Heart left ventricle (tissue), 16 donors: ENCODE measurements at regions of chr22 and their contacts with region 1.

Region 1: GRCh38 chr22:20507253-20508066 is at the start of gene MED15:
- DNase-seq: peak; percentile 92 to 95 (median 93)
- ATAC-seq: peak; percentile 90 to 94 (median 94)
- H3K4me3 ChIP-seq: peak within 1 kb of the TSS; percentile 58 to 97 (median 82)
- H3K27ac ChIP-seq: peak within 1 kb of the TSS; percentile 77 to 97 (median 94)
- H3K4me1 ChIP-seq: peaks cover 0 to 48% (median 37%) of the 10 kb centered on the region in 12 donors
- H3K27me3 ChIP-seq: no peaks in the 10 kb centered on the region
- CTCF ChIP-seq: no peak
- POLR2A ChIP-seq: peak; percentile 37 to 82
- total RNA-seq, gene MED15: 27.9 to 78.3 (median 43.0) TPM

Region 2: DNA sequence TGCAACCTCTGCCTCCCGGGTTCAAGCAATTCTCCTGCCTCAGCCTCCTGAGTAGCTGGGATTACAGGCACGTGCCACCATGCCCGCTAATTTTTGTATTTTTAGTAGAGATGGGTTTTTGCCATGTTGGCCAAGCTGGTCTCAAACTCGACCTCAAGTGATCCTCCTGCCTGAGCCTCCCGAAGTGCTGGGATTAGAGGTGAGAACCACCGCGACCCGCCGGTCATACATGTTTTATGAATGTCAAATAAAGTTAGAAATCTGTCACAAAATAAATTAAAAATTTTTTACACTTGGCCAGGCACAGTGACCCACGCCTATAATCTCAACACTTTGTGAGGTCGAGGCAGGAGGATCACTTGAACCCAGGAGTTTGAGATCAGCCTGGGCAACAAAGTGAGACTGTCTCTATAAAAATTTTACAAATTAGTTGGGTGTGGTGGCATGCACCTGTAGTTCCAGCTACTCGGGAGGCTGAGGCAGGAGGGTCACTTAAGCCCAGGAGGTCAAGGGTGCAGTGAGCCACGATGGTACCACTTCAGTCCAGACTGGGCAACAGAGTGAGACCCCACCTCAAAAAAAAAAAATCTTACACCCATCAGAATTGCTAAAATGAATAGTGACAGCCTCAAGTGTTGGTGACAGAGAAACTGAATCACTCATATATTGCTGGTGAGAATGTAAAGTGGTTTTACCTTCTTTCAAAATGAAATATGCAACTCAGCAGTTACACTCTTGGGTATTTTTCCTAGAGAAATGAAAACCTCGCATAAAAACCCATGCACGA is 55.2 kb after region 1 on chr22:
- intact Hi-C with region 1: loop called in 4 of 10 experiments (anchors 5 kb)
- DNase-seq: no peak
- ATAC-seq: no peak
- H3K4me3 ChIP-seq: no peak overlapping the region
- H3K27ac ChIP-seq: no peak overlapping the region
- H3K4me1 ChIP-seq: peaks cover 0 to 37% (median 10%) of the 10 kb centered on the region in 12 donors
- H3K27me3 ChIP-seq: no peaks in the 10 kb centered on the region
- CTCF ChIP-seq: no peak
- POLR2A ChIP-seq: no peak